ENCODE measurements at regions of chr9 and their contacts with region 1.

Region 1: DNA sequence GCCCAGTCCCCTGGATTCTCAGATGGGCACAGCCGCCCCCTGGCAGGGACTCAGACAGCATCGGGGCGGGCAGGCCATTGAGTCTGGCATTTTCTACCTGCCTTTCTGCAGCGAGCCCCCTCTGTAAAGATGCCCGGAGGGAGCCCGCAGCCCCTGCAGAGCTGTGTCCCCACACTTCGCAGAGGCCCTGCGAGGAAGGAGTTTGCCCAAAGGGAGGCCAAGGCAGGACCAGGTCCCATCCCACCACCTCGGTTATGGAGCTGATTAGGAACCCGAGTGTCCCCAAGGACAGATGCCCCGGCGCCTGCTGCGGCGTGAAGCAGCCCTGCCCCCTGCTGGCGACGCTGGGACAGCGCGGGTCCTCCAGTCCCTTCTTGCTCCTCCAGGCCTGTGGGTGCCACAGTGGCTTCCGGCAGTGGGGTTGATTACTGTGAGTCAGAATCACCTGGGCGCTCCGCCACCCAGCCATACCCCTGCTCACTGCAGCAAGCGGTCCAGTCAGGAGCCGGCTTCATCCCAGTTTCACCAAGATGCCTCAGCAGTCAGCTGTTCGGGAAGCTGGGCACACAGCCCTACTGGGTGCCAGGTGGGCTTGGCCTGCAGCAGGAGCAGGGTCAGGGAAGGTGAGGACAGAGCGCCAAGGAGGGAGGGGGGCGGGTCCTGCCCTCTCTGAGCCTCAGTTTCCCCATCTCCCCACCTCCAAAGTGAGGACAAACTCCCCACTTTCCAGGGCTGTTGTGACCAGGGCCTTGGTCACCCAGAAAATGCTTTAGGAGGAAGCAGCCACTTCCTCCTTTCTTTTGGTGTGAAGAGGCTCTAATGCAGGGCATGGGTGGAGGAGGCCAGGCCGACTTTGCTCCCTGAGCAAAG is 117.1 kb downstream of the RXRA start:
- DNase-seq: peak; percentile 94
- H3K4me3 ChIP-seq: peak overlapping the region in 1 of 2 experiments; percentile 44; a peak in 1 of 4 replicates
- H3K27ac ChIP-seq: no peak overlapping the region
- H3K4me1 ChIP-seq: peaks cover 18 to 20% of the 10 kb centered on the region in 2 experiments; a peak in 2 of 4 replicates
- H3K27me3 ChIP-seq: no peaks in the 10 kb centered on the region
- CTCF ChIP-seq: peak; percentile 97
- EP300 ChIP-seq: no peak; a peak in 1 of 4 replicates
- RAD21 ChIP-seq: peak; percentile 99

Region 2: GRCh38 chr9:134146774-134147500 is 296.5 kb before region 1 on chr9:
- CTCF ChIA-PET with region 1: no interaction called
- POLR2A ChIA-PET with region 1: no interaction called
- DNase-seq: no peak
- H3K4me3 ChIP-seq: no peak overlapping the region
- H3K27ac ChIP-seq: no peak overlapping the region
- H3K4me1 ChIP-seq: peaks cover 0 to 5% of the 10 kb centered on the region in 2 experiments; a peak in 1 of 4 replicates
- H3K27me3 ChIP-seq: no peaks in the 10 kb centered on the region
- CTCF ChIP-seq: no peak
- EP300 ChIP-seq: no peak
- RAD21 ChIP-seq: no peak

Region 3: GRCh38 chr9:134163353-134164196 is 279.8 kb before region 1 on chr9:
- CTCF ChIA-PET with region 1: interaction called, 384 read pairs
- POLR2A ChIA-PET with region 1: interaction called, 3 read pairs
- DNase-seq: peak; percentile 67
- H3K4me3 ChIP-seq: no peak overlapping the region
- H3K27ac ChIP-seq: no peak overlapping the region; a peak in 1 of 4 replicates
- H3K4me1 ChIP-seq: no peaks in the 10 kb centered on the region; a peak in 2 of 4 replicates
- H3K27me3 ChIP-seq: no peaks in the 10 kb centered on the region
- CTCF ChIP-seq: no peak
- EP300 ChIP-seq: no peak
- RAD21 ChIP-seq: no peak

Region 4: DNA sequence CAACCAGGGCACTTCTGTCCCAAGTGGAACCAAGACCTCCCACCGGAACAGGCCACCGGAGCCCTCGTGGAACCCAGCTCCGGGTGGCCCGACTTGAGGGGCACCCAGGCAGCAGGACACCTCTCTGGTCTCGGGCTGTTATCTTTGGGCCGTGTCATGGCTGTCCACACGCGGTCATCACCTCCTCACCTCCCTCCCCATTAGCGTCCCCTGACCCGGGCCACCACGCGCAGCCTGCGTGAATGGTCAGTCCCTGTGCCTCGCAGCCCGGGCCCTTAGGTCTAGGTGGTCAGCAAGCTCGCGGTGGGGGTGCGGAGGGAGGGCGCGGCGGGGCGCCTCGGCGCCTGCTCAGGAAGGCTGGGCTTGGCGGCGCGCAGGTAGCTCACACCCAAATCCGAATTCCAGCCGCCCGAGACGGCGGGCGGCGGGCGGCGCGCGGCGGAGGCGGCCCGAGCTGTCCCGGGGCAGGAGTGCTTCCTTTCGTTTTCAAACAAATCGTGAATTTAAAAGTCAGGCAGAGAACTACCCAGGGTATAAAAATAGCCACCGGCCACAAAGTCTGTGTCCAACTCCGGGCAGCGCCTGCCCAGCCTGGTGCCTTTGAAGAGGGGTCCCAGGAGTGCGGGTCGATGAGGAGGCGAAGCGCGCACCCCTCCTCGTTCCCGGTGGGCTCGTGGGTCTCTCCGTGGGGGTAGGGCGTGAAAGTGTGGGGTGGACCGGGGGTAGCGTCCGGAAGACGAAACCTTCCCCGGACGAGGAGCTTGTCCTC is 118.2 kb before region 1 on chr9:
- CTCF ChIA-PET with region 1: interaction called, 32 read pairs
- POLR2A ChIA-PET with region 1: interaction called, 3 read pairs
- DNase-seq: no peak
- H3K4me3 ChIP-seq: peak overlapping the region; percentile 67 to 71
- H3K27ac ChIP-seq: peak overlapping the region; percentile 84 to 92
- H3K4me1 ChIP-seq: peaks cover 35 to 43% of the 10 kb centered on the region in 2 experiments; a peak in 3 of 4 replicates
- H3K27me3 ChIP-seq: no peaks in the 10 kb centered on the region
- CTCF ChIP-seq: no peak
- EP300 ChIP-seq: no peak
- RAD21 ChIP-seq: no peak

Region 5: DNA sequence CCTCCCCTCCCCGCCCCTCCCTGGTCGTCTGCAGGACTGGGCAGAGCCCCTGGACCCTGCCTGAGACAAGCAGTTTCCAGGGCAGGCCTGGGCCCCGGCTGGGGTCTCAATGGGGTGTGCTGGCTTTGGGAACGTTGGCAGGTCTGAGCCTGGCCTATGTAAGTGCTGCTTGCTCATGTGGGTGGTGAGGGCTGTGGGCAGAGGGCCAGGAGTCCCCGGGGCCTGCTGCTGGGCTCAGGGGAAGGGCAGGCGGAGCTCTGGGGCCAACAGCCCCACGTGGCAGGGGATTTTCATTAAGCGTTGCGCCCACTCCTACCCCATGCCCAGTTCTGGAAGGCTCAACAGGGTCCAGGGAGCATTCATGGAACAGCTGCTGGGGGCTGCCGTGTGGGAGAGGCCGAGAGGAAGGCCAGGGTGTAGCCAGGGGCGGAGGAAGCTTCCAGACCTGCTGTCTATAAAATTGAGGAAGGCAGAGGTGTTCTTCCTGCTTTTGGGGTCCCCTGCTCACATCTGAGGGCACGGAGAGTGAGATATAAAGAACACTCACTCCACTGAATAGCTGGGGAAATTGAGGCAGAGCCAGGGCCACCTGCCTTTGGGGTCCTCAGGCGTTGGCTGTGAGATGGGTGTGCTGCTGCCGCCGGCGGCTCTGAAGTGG is 84.6 kb before region 1 on chr9:
- CTCF ChIA-PET with region 1: interaction called, 31 read pairs
- POLR2A ChIA-PET with region 1: no interaction called
- DNase-seq: peak; percentile 74
- H3K4me3 ChIP-seq: no peak overlapping the region
- H3K27ac ChIP-seq: peak overlapping the region in 1 of 2 experiments; percentile 56; a peak in 2 of 4 replicates
- H3K4me1 ChIP-seq: peaks cover 18 to 87% of the 10 kb centered on the region in 2 experiments
- H3K27me3 ChIP-seq: no peaks in the 10 kb centered on the region
- CTCF ChIP-seq: no peak
- EP300 ChIP-seq: no peak
- RAD21 ChIP-seq: no peak

Region 6: DNA sequence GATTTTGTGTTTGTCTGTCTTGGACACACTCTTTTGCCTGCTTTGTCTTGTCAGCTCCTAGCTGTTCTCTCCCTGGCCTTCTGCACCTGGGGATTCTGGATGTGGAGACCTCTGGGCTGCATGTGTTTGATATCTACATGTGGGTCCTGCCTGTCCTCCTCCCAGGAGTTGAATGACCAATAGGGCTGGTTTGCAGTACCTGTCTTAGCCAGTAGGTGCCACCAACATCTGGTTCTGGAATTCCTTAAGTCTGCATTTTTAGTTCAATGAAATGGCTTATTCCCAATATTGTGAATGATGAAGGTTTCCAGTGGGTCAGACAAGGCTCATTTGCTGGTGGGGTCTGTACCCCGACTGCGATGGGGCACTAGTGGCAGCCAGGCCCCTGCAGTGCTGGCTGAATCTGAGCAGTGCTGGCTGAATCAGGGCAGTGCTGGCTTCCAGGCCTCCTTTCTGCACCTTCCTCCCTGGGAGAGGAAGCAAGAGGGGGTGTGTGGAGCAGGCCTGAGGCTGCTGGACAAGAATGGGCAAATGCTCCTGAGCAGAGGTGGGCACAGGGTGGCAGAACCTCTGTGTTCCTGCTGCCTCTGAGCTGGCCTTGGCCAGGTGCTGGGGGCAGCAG is 43.9 kb before region 1 on chr9:
- CTCF ChIA-PET with region 1: interaction called, 13 read pairs
- POLR2A ChIA-PET with region 1: no interaction called
- DNase-seq: no peak
- H3K4me3 ChIP-seq: no peak overlapping the region
- H3K27ac ChIP-seq: no peak overlapping the region
- H3K4me1 ChIP-seq: peaks cover 10 to 21% of the 10 kb centered on the region in 2 experiments; a peak in 3 of 4 replicates
- H3K27me3 ChIP-seq: no peaks in the 10 kb centered on the region
- CTCF ChIP-seq: peak; percentile 63
- EP300 ChIP-seq: no peak
- RAD21 ChIP-seq: no peak

Region 7: DNA sequence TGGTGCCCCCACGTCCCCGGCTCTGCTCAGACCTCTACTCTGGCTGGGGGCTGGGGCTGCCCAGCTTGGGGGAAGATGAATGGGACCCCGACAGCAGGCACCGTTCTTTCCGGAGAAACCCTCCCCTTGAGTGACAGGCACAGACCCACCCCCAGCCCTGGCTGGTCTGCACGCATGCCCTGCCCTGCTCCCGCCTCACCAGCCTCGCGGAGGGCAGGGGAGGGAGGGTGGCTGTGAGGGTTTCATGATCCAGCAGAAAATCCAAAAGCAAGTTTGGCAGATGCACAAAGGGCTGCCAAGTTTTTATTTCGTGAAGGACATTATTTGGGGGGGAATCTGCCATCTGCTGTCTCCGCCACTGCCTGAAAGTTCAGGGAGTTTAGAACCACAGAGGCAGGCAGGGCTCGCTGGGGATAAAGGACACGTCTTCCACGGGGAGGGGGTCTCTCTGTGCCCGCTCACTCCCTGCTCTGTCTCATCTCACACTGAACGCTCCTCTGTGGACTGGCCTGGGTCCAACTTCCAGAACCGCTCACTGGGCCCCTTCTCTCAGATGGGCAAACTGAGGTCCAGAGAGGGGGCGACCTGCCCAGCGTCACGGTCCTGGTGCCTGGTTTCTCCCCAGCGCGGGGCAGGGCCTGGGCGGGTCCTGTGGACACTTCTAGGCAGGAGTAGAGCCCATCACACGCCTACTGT is 24.3 kb before region 1 on chr9:
- CTCF ChIA-PET with region 1: interaction called, 11 read pairs
- POLR2A ChIA-PET with region 1: no interaction called
- DNase-seq: no peak
- H3K4me3 ChIP-seq: no peak overlapping the region
- H3K27ac ChIP-seq: no peak overlapping the region
- H3K4me1 ChIP-seq: peaks cover 10 to 13% of the 10 kb centered on the region in 2 experiments; a peak in 3 of 4 replicates
- H3K27me3 ChIP-seq: no peaks in the 10 kb centered on the region
- CTCF ChIP-seq: no peak
- EP300 ChIP-seq: no peak
- RAD21 ChIP-seq: no peak

Region 8: GRCh38 chr9:134748591-134748990 is 305.2 kb after region 1 on chr9:
- CTCF ChIA-PET with region 1: no interaction called
- POLR2A ChIA-PET with region 1: no interaction called
- DNase-seq: no peak
- H3K4me3 ChIP-seq: no peak overlapping the region
- H3K27ac ChIP-seq: no peak overlapping the region
- H3K4me1 ChIP-seq: no peaks in the 10 kb centered on the region
- H3K27me3 ChIP-seq: no peaks in the 10 kb centered on the region
- CTCF ChIP-seq: no peak
- EP300 ChIP-seq: no peak
- RAD21 ChIP-seq: no peak

Region 9: GRCh38 chr9:134826336-134827285 is 383.2 kb after region 1 on chr9:
- CTCF ChIA-PET with region 1: no interaction called
- POLR2A ChIA-PET with region 1: no interaction called
- DNase-seq: no peak
- H3K4me3 ChIP-seq: no peak overlapping the region
- H3K27ac ChIP-seq: no peak overlapping the region
- H3K4me1 ChIP-seq: no peaks in the 10 kb centered on the region
- H3K27me3 ChIP-seq: no peaks in the 10 kb centered on the region
- CTCF ChIP-seq: no peak
- EP300 ChIP-seq: no peak
- RAD21 ChIP-seq: no peak